ENCODE measurements at regions of chr2 and their contacts with region 1.

Region 1: DNA sequence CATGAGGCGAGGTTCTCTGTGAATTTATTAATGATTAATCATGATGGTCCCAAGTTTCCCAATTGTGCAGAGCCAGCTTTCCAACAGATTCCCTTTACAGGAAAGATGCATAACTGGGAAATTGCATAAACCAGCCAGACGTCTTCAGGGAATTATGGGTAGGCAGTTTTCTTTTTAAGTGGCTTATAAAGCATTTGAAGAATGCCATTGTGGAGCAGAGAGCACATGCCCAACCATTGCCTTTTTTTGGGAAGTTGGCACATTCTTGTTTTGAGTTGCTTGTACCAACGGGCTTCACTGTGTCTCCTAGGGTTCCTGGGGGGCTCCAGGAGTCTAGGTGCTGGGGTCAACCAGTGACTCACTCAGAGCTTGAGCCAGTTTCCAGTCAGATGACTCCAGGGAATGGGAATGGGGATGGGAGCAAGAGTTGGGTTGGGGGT is 231.7 kb upstream of the FOSL2 start:
- DNase-seq: peak; percentile 82
- H3K4me3 Mint-ChIP-seq: no peak overlapping the region
- H3K27ac Mint-ChIP-seq: peak overlapping the region; percentile 89
- H3K4me1 Mint-ChIP-seq: peaks cover 45% of the 10 kb centered on the region
- H3K27me3 Mint-ChIP-seq: no peaks in the 10 kb centered on the region
- CTCF ChIP-seq: no peak

Region 2: DNA sequence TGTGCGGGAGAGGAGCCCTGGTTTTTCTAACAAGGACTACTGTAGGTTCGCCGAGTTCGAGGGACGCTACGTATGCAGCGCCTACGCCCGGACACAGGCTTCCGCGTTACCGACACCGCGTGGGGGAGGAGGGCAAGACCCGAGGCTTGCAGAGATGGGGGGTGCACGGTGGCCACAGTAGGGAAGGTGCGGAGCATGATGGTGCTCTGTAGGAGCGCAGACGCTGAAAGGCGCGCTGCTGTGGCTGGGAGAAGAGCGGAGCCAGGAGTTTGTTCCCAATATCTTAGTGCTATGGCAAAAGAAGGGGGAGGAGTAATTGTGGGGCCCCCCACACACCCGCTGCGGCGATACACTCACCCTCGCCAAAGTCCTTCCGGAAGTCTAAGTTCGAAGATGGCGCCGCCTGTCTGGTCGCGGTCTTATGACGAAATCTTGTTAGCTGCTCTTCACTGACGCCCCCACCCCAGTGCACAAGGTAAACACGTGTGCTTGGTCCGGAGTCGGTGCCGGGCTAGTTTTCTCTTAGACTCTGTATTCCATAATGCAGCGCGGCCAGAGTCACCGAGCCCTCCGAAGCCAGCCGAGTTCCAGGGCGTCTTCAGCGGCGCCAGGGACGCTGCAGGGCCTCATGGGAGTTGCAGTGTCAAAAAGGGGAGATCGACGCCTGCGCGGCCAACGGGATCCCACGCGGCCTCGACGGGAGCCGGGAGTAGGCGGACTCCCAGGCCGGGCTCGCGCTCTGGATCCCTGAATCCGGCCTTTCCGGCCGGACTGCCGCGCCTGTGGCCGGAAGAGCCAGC is 804.4 kb before region 1 on chr2 and contains the start of gene GTF3C2:
- CTCF ChIA-PET with region 1: no interaction called
- POLR2A ChIA-PET with region 1: no interaction called
- intact Hi-C with region 1: no loop called
- DNase-seq: peak; percentile 97
- H3K4me3 Mint-ChIP-seq: peak within 1 kb of the TSS; percentile 90
- H3K27ac Mint-ChIP-seq: peak within 1 kb of the TSS; percentile 93
- H3K4me1 Mint-ChIP-seq: peaks cover 31% of the 10 kb centered on the region
- H3K27me3 Mint-ChIP-seq: no peaks in the 10 kb centered on the region
- CTCF ChIP-seq: no peak
- total RNA-seq, gene GTF3C2: 47.5 and 47.8 TPM in 2 replicates

Region 3: GRCh38 chr2:28055325-28055970 is 105.6 kb before region 1 on chr2:
- CTCF ChIA-PET with region 1: no interaction called
- POLR2A ChIA-PET with region 1: no interaction called
- intact Hi-C with region 1: no loop called
- DNase-seq: peak; percentile 32
- H3K4me3 Mint-ChIP-seq: no peak overlapping the region
- H3K27ac Mint-ChIP-seq: no peak overlapping the region
- H3K4me1 Mint-ChIP-seq: no peaks in the 10 kb centered on the region
- H3K27me3 Mint-ChIP-seq: no peaks in the 10 kb centered on the region
- CTCF ChIP-seq: no peak

Region 4: DNA sequence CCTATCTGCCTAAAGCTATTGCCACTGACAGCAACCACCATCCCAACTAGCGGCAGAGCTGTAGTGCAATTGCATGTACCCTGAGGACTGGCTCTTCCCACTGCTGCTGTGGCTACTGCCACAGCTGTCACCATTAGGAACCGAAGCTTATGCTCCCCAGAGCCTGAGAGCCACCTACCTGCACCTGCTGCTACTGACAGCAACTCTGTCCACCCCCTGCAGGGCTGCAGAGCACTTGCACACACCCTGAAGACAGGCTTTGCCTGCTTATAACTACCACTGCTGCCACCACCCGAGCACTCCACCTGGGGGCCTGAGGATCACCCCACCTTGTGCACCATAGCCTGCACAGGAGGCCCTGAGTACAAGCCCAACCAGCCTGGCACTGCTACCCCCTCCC is 14.0 kb after region 1 on chr2:
- CTCF ChIA-PET with region 1: interaction called, 3 read pairs
- POLR2A ChIA-PET with region 1: interaction called, 24 read pairs
- intact Hi-C with region 1: no loop called
- DNase-seq: no peak
- H3K4me3 Mint-ChIP-seq: no peak overlapping the region
- H3K27ac Mint-ChIP-seq: no peak overlapping the region
- H3K4me1 Mint-ChIP-seq: peaks cover 17% of the 10 kb centered on the region
- H3K27me3 Mint-ChIP-seq: no peaks in the 10 kb centered on the region
- CTCF ChIP-seq: no peak